Gastrocnemius medialis (tissue), 4 donors: ENCODE measurements at regions of chr4 and their contacts with region 1.

Region 1: GRCh38 chr4:139642364-139642763 is 23.3 kb upstream of the MGST2 start:
- DNase-seq: no peak
- ATAC-seq: no peak
- H3K4me3 ChIP-seq: no peak overlapping the region
- H3K27ac ChIP-seq: no peak overlapping the region
- H3K4me1 ChIP-seq: no peaks in the 10 kb centered on the region
- H3K27me3 ChIP-seq: no peaks in the 10 kb centered on the region
- CTCF ChIP-seq: no peak
- POLR2A ChIP-seq: no peak

Region 2: GRCh38 chr4:139493176-139493575 is 149.2 kb before region 1 on chr4:
- in situ Hi-C with region 1: loop called in 1 of 4 experiments (anchors 10 kb)
- intact Hi-C with region 1: no loop called
- DNase-seq: no peak
- ATAC-seq: no peak
- H3K4me3 ChIP-seq: no peak overlapping the region
- H3K27ac ChIP-seq: no peak overlapping the region
- H3K4me1 ChIP-seq: peaks cover 11 to 17% of the 10 kb centered on the region in 2 donors
- H3K27me3 ChIP-seq: no peaks in the 10 kb centered on the region
- CTCF ChIP-seq: no peak
- POLR2A ChIP-seq: no peak

Region 3: DNA sequence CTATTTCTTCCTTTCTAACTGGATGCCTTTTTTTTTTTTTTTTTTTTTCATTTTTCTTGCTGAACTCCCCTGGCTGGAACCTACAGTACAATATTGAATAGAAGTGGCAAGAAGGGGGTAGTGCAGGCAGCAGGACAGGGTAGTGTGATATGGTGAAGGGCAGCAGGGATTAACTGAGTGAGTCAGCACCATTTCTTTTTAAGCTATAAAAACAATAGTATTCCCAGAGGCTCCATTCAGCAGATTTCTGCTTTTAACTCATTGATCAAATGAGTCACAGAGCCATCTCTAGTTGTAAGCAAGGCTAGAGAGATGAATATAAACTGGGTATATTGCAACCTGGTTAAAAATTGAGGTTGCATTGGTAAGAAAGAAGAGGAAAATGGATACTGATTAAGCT is 32.7 kb before region 1 on chr4:
- in situ Hi-C with region 1: loop called in 1 of 4 experiments (anchors 5 kb)
- intact Hi-C with region 1: no loop called
- DNase-seq: no peak
- ATAC-seq: no peak
- H3K4me3 ChIP-seq: no peak overlapping the region
- H3K27ac ChIP-seq: no peak overlapping the region
- H3K4me1 ChIP-seq: no peaks in the 10 kb centered on the region
- H3K27me3 ChIP-seq: no peaks in the 10 kb centered on the region
- CTCF ChIP-seq: no peak
- POLR2A ChIP-seq: no peak